CD14-positive monocyte (primary cell): ENCODE measurements at regions of chr11 and their contacts with region 1.

Region 1: GRCh38 chr11:1837171-1838076 is 1.4 kb upstream of the TNNI2 start:
- DNase-seq: peak; percentile 62 to 67 (median 64)
- H3K4me3 ChIP-seq: no peak overlapping the region
- H3K4me3 Mint-ChIP-seq: no peak overlapping the region
- H3K27ac ChIP-seq: no peak overlapping the region
- H3K27ac Mint-ChIP-seq: peak overlapping the region in 2 of 7 donors; percentile 30 to 60
- H3K4me1 ChIP-seq: peaks cover 56 to 60% of the 10 kb centered on the region in 2 donors
- H3K4me1 Mint-ChIP-seq: peaks cover 33% of the 10 kb centered on the region
- H3K27me3 ChIP-seq: peaks cover 0 to 10% of the 10 kb centered on the region in 2 donors
- H3K27me3 Mint-ChIP-seq: peaks cover 11 to 29% (median 12%) of the 10 kb centered on the region in 3 donors
- CTCF ChIP-seq: peak; percentile 99

Region 2: GRCh38 chr11:1882519-1883238 is 45.3 kb after region 1 on chr11:
- intact Hi-C with region 1: loop called (anchors 2 to 5 kb)
- DNase-seq: peak; percentile 51 to 66 (median 64)
- H3K4me3 ChIP-seq: no peak overlapping the region
- H3K4me3 Mint-ChIP-seq: no peak overlapping the region
- H3K27ac ChIP-seq: peak overlapping the region in 1 of 2 donors; percentile 26
- H3K27ac Mint-ChIP-seq: no peak overlapping the region
- H3K4me1 ChIP-seq: peaks cover 34 to 40% of the 10 kb centered on the region in 2 donors
- H3K4me1 Mint-ChIP-seq: peaks cover 33% of the 10 kb centered on the region
- H3K27me3 ChIP-seq: peaks cover 0 to 4% of the 10 kb centered on the region in 2 donors
- H3K27me3 Mint-ChIP-seq: peaks cover 4 to 12% (median 5%) of the 10 kb centered on the region in 3 donors
- CTCF ChIP-seq: peak; percentile 91

Region 3: DNA sequence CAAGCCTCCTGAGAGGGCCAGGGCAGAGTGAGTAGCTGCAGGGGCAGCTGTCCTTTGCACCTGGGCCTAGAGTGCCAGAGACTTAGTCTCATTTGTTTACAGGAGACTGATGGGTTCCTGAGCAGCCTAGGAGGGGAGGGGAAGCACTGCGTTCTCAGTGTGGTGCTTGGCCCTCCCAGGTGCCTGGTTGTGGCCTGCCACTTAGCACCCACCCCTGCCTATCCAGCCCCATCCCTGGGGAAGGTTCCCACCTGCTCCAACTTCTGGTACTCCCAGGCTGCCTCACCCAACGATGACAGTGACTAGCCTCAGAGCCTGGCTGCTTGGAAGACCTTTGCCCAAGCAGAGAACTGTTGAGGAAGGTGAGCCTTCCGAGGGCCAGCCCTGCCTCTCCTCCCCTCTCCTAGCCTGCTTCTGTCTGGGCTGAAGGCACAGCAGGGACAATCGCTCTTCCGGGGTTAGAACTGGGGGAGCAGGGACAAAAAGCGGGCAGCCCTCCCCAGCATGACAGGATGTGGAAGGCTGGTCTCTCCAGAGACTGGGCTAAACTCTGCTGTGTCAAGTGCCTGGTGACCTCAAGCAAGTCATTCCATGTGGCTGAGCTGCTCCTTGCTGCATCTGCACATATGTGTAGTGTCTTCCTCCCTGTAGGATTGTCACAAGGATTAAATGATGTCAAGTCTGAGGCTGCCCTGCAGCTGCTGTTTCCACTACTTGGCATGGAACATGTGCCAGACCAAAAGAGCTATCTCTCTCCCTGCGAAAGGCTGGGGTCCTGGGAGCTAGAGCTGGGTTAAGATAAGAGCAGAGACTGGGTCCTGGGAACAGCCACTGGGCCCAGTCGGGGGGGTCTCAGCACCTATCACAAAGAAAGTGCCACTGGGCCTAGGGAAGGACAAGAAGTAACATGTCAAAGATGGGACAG is 852.5 kb after region 1 on chr11:
- intact Hi-C with region 1: no loop called
- DNase-seq: no peak
- H3K4me3 ChIP-seq: no peak overlapping the region
- H3K4me3 Mint-ChIP-seq: no peak overlapping the region
- H3K27ac ChIP-seq: no peak overlapping the region
- H3K27ac Mint-ChIP-seq: no peak overlapping the region
- H3K4me1 ChIP-seq: no peaks in the 10 kb centered on the region
- H3K4me1 Mint-ChIP-seq: peaks cover 7% of the 10 kb centered on the region
- H3K27me3 ChIP-seq: no peaks in the 10 kb centered on the region
- H3K27me3 Mint-ChIP-seq: no peaks in the 10 kb centered on the region
- CTCF ChIP-seq: no peak